ENCODE measurements at regions of chr3 and their contacts with region 1.

Region 1: DNA sequence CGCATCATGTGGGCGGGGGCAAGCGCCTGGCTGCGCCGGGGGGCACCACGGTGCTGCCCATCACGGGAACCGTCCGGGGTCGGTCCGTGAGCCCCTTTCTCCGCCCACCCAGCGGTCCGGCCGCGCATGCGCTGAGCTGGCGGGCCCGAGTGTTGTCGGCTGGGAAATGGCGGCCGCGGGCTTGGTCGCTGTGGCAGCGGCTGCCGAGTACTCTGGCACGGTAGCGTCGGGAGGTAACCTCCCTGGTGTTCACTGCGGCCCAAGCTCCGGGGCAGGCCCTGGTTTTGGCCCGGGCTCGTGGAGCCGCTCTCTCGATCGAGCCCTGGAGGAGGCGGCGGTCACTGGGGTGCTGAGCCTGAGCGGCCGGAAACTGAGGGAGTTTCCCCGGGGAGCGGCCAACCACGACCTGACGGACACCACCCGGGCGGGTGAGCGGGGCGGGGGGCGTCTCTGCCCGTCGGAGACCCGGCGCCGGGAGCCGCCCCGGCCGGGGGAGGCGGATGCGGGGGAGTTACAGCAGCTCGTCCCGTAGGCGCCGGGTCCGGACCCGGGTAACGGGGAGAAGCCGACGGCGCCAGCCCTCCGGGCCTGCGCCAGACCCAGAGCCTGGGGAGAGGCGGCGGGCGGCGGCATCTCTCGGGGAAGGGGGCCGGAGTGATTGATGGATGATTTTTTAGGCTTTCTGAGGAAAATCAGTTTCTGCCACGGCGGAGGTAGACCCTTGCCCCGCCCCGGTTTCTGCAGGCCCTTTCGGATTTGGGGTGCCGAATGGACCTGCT is at the start of gene LRCH3:
- DNase-seq: peak; percentile 23
- ATAC-seq: peak; percentile 85
- H3K4me3 ChIP-seq: peak within 1 kb of the TSS; percentile 62 to 80
- H3K27ac ChIP-seq: peak within 1 kb of the TSS; percentile 84
- H3K4me1 ChIP-seq: peaks cover 0 to 15% of the 10 kb centered on the region in 2 experiments; a peak in 1 of 4 replicates
- H3K27me3 ChIP-seq: no peaks in the 10 kb centered on the region
- CTCF ChIP-seq: no peak
- POLR2A ChIP-seq: peak; percentile 86
- RAD21 ChIP-seq: no peak
- total RNA-seq, gene LRCH3: 38.1 TPM

Region 2: DNA sequence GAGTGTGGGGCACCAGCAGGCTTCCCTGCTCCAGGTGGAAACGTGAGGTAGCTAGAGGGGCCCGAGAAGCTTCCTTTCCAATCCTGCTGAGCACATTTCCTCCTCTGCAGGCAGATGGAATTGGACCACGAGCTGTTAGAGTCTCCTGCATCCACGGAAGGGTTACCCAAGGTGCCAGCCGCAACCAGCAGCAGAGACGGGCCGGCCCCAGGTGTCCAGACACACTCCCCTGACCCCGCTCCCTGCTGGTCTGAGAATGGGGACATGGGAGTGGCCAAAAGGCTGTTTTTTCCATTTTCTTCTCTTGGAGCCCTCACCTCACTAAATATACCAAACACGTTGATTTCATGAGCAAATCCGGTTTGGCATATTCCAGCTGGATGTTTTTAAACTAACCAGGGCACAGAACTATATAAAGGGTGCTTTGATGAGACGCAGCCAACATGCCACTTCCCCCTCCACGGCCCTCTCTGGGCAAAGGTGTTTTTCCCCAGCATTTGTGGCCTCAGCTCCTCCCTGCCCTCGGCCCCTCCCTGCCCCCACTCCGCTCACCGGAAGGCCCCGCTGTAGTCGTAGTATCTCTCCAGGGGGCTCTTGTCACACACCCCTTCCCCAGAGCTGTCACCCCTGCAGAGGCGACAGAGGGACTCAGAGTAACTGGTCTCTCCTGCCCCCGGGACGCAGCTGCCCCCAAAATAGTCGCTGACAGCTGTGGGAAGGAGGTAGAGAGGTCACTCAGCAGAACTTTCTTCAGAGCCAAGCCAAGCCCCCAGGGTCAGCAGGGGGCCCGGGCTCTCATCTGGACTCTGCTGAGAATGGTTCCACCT is 768.7 kb before region 1 on chr3:
- CTCF ChIA-PET with region 1: no interaction called
- POLR2A ChIA-PET with region 1: no interaction called
- RAD21 ChIA-PET with region 1: no interaction called
- intact Hi-C with region 1: no loop called
- DNase-seq: no peak
- ATAC-seq: no peak
- H3K4me3 ChIP-seq: no peak overlapping the region
- H3K27ac ChIP-seq: no peak overlapping the region
- H3K4me1 ChIP-seq: peaks cover 0 to 9% of the 10 kb centered on the region in 2 experiments; a peak in 1 of 4 replicates
- H3K27me3 ChIP-seq: no peaks in the 10 kb centered on the region
- CTCF ChIP-seq: no peak
- POLR2A ChIP-seq: no peak
- RAD21 ChIP-seq: no peak

Region 3: DNA sequence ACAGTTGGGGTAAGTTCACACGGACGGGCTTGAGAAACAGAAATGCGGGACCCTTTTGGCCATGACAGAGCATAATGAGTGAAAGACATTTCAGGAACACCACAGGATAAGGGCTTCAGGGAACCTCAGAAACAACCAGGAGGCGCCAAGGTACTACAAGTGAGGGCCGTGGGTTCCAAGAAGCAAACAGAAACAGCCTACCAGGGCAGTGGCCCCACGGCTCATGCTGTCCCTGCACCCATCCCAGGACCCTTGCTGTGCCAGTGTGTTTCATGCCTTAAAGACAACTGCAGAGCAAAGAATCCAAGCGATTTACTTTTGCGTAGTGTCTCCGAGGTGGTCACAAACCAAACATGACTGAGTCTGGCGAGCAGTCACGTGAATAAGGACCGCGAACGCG is 108.6 kb before region 1 on chr3:
- CTCF ChIA-PET with region 1: no interaction called
- POLR2A ChIA-PET with region 1: no interaction called
- RAD21 ChIA-PET with region 1: no interaction called
- intact Hi-C with region 1: loop called (anchors 10 kb)
- DNase-seq: no peak
- ATAC-seq: no peak
- H3K4me3 ChIP-seq: no peak overlapping the region
- H3K27ac ChIP-seq: no peak overlapping the region
- H3K4me1 ChIP-seq: no peaks in the 10 kb centered on the region
- H3K27me3 ChIP-seq: no peaks in the 10 kb centered on the region
- CTCF ChIP-seq: peak; percentile 2 to 12 (median 8); a peak in 1 of 6 replicates
- POLR2A ChIP-seq: no peak
- RAD21 ChIP-seq: peak; percentile 65

Measured in HCT116 (cell line).